ENCODE measurements at regions of chr12 and their contacts with region 1.

Region 1: DNA sequence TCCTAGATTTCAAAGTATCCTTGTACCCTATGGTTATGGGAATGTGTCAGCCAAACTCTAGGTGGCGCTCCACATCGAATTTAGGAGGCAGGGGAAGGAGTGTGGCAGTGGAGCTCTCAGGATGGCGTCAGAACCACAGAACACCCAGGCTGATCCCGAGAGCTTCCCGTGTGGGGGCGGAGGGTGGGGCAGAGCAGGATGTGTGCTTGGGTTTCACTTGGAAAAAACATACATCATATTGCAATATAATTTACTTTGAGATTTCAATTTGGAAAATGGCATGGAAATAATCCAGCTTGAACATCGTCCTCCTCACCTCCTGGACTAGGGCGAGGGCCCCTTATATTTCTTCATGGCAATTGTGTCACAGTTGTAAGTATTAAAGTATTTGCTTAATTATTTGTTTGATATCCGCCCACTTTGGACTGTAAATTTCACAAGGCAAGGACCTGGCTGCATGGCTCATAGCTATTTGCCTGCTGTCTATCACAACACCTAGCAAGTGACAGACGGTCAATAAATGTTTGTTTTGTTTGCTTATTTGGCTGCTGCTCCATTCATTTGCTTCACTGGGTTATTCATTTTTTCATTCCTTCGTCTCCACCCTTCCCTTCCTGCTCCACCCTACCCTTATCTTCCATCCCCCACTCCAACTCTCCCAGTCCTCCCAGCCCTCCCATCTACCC is 221.5 kb upstream of the HMGA2 start:
- DNase-seq: peak; percentile 62
- ATAC-seq: peak; percentile 99
- H3K4me3 ChIP-seq: peak overlapping the region in 1 of 3 experiments; percentile 28; a peak in 1 of 6 replicates
- H3K27ac ChIP-seq: no peak overlapping the region
- H3K4me1 ChIP-seq: peaks cover 19% of the 10 kb centered on the region
- H3K27me3 ChIP-seq: no peaks in the 10 kb centered on the region
- CTCF ChIP-seq: peak; percentile 79
- EP300 ChIP-seq: no peak
- POLR2A ChIP-seq: no peak
- RAD21 ChIP-seq: no peak

Region 2: DNA sequence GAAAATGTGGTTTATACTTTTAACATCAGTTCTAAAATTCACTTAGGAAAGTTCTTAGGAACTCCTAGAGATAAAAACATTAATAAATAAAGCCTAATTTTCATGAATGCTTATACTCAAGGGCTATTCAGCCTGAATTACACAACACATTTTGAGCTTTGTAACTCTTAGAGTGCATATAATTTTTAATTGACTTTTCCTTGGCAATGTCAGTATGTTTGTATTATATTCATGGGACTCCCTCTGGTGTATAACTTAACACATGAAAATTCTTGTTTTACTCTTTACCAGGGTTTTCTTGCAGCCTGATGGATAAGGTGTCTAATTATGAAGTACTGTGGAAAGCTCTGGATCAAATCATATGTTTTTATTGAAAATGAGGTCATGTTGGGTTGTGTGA is 71.0 kb after region 1 on chr12:
- CTCF ChIA-PET with region 1: no interaction called
- POLR2A ChIA-PET with region 1: no interaction called
- in situ Hi-C with region 1: no loop called
- intact Hi-C with region 1: loop called (anchors 2 kb)
- DNase-seq: no peak
- ATAC-seq: no peak
- H3K4me3 ChIP-seq: no peak overlapping the region
- H3K27ac ChIP-seq: no peak overlapping the region
- H3K4me1 ChIP-seq: no peaks in the 10 kb centered on the region
- H3K27me3 ChIP-seq: no peaks in the 10 kb centered on the region; a peak in 1 of 5 replicates
- CTCF ChIP-seq: no peak
- EP300 ChIP-seq: no peak
- POLR2A ChIP-seq: no peak
- RAD21 ChIP-seq: no peak

Region 3: DNA sequence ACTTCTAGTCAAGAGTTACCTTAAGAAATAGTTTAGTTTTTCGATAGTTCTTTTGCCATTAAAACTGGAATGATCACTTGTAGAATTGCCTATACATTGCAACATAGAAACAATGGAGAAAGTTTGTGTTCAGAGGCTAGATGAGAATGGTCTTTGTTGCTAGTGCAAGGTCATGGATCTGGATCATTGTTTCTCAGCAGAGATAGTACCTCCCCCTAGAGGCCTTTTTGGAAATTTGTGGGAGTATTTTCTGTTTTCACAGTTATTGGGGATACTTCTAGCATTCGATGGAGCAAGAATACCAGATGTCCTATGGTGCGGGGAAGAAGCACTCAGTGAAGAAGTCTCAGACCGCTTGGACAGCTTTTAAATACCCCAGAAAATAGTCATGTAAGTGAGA is 82.8 kb after region 1 on chr12:
- CTCF ChIA-PET with region 1: interaction called, 4 read pairs
- POLR2A ChIA-PET with region 1: no interaction called
- in situ Hi-C with region 1: no loop called
- intact Hi-C with region 1: loop called (anchors 1 kb)
- DNase-seq: peak; percentile 24
- ATAC-seq: peak; percentile 60; the same call in 2 of the 3 replicates
- H3K4me3 ChIP-seq: no peak overlapping the region
- H3K27ac ChIP-seq: no peak overlapping the region
- H3K4me1 ChIP-seq: no peaks in the 10 kb centered on the region
- H3K27me3 ChIP-seq: no peaks in the 10 kb centered on the region; a peak in 1 of 5 replicates
- CTCF ChIP-seq: peak; percentile 40
- EP300 ChIP-seq: no peak
- POLR2A ChIP-seq: no peak
- RAD21 ChIP-seq: no peak

Region 4: DNA sequence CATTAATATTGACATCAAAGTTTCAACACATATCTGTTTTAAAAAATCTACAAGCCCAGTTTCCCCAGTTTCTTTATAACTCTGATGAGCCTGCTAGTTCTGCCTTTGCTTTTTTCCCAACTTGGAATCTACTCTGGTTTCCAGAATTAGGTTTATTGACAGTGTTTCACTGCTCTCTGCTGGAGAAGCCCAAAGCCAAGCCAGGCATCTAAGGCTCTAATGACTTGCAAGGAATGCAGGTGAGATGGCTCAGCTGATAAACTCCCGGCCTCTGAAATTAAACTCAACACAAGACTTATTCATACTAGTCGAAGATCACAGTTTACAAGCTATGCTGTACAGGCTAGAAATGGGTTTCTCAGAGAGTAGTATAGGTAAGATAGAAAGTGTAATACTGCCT is 275.8 kb after region 1 on chr12:
- CTCF ChIA-PET with region 1: no interaction called
- POLR2A ChIA-PET with region 1: no interaction called
- in situ Hi-C with region 1: no loop called
- intact Hi-C with region 1: loop called (anchors 5 kb)
- DNase-seq: no peak
- ATAC-seq: no peak
- H3K4me3 ChIP-seq: no peak overlapping the region
- H3K27ac ChIP-seq: no peak overlapping the region
- H3K4me1 ChIP-seq: peaks cover 76% of the 10 kb centered on the region
- H3K27me3 ChIP-seq: no peaks in the 10 kb centered on the region
- CTCF ChIP-seq: peak; percentile 39
- EP300 ChIP-seq: no peak
- POLR2A ChIP-seq: no peak
- RAD21 ChIP-seq: no peak

Region 5: DNA sequence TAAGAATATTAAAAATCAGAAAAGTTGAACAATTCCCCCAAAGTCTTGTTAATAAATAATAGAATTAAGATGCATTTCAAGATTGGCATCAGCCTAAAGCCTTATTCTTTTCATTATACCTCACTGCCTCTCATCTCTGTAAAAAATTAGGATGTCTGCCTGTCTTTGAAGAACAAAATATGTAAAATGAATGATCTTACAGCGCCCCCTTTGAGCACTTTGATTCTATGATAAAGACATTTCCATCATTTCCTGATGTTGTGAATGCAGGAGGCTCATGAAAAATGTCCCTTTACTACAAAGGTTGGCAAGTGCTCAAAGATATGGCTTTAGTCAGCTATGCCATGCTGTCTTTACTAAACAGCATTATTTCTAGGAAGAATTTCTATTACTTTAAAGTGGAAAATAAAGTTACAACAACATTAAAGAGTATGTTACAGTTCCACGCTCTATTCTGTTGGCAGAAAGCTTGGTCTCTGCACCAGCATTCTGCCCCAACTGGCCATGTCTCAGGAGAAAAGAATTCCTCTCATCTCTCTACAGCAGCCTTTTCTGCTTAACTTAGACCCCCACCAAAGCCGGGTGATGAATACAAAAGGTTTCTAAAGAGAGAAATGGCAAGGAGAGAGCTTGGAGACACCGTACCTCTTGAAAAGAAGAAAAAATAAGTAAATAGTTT is 432.7 kb after region 1 on chr12:
- CTCF ChIA-PET with region 1: no interaction called
- POLR2A ChIA-PET with region 1: no interaction called
- in situ Hi-C with region 1: no loop called
- intact Hi-C with region 1: loop called (anchors 1 kb)
- DNase-seq: peak; percentile 42
- ATAC-seq: no peak
- H3K4me3 ChIP-seq: no peak overlapping the region
- H3K27ac ChIP-seq: no peak overlapping the region
- H3K4me1 ChIP-seq: peaks cover 15% of the 10 kb centered on the region
- H3K27me3 ChIP-seq: no peaks in the 10 kb centered on the region; a peak in 1 of 5 replicates
- CTCF ChIP-seq: peak; percentile 28; the same call in 1 of the 2 replicates
- EP300 ChIP-seq: no peak
- POLR2A ChIP-seq: no peak
- RAD21 ChIP-seq: no peak

Region 6: DNA sequence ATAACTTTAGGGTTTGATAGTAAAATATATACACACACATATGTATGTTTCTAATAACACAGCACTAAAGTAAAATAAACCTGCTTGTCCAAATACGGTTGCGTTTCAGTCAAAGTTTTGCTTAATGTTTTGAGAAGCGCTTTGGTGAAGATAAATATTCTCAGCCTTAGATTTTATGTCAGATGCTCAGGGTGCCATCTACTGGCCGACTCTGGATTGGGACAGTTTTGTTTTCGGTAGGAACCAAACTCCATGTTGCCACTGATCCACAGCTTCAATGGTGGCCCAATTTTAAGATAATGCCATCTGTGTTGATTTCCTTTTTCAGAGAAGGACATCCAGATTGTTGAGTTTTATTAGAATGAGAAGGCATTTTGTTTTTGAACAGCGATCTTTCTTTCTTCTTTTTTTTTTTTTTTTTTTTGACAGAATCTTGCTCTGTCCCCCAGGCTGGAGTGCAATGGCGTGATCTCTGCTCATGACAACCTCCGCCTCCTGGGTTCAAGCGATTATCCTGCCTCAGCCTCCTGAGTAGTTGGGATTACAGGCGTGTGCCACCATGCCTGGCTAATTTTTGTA is 484.7 kb after region 1 on chr12:
- CTCF ChIA-PET with region 1: no interaction called
- POLR2A ChIA-PET with region 1: no interaction called
- in situ Hi-C with region 1: no loop called
- intact Hi-C with region 1: loop called (anchors 1 kb)
- DNase-seq: peak; percentile 57
- ATAC-seq: peak; percentile 72
- H3K4me3 ChIP-seq: no peak overlapping the region
- H3K27ac ChIP-seq: no peak overlapping the region
- H3K4me1 ChIP-seq: peaks cover 27% of the 10 kb centered on the region
- H3K27me3 ChIP-seq: no peaks in the 10 kb centered on the region
- CTCF ChIP-seq: peak; percentile 83
- EP300 ChIP-seq: no peak
- POLR2A ChIP-seq: no peak
- RAD21 ChIP-seq: peak; percentile 77

Region 7: DNA sequence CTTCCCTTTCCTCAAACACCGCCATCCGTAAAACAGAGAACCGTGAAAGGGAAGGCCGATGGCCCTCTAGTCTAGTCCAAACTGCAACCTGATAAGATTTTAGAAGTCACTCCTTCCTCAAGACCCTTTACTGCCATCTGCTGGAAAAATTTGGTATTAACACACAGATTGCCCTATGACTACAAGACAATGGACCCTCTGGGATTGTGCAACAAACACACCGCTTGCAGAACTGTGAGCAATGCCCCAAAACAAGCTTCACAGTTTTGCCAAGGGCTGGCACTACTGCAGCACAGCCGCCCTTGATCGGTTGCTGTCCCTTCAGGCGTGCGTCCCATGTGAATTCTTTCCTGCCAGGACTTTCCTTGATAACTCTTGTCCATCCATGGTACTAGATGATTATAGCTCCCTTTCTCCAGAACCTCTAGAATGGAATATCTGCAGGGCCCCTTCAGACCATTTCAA is 504.7 kb after region 1 on chr12:
- CTCF ChIA-PET with region 1: interaction called, 4 read pairs
- POLR2A ChIA-PET with region 1: no interaction called
- in situ Hi-C with region 1: loop called (anchors 25 kb)
- intact Hi-C with region 1: loop called (anchors 2 kb)
- DNase-seq: peak; percentile 93
- ATAC-seq: peak; percentile 96
- H3K4me3 ChIP-seq: peak overlapping the region in 1 of 3 experiments; percentile 12; a peak in 2 of 6 replicates
- H3K27ac ChIP-seq: no peak overlapping the region
- H3K4me1 ChIP-seq: peaks cover 12% of the 10 kb centered on the region
- H3K27me3 ChIP-seq: no peaks in the 10 kb centered on the region
- CTCF ChIP-seq: peak; percentile 88
- EP300 ChIP-seq: no peak
- POLR2A ChIP-seq: no peak
- RAD21 ChIP-seq: peak; percentile 72

Measured in HepG2 (cell line).